ENCODE measurements at regions of chr15 and their contacts with region 1.

Region 1: GRCh38 chr15:78308422-78309032 is 9.1 kb upstream of the SKIC8 start:
- DNase-seq: peak; percentile 47
- H3K4me3 Mint-ChIP-seq: no peak overlapping the region
- H3K27ac Mint-ChIP-seq: no peak overlapping the region
- H3K4me1 Mint-ChIP-seq: no peaks in the 10 kb centered on the region
- H3K27me3 Mint-ChIP-seq: no peaks in the 10 kb centered on the region

Region 2: DNA sequence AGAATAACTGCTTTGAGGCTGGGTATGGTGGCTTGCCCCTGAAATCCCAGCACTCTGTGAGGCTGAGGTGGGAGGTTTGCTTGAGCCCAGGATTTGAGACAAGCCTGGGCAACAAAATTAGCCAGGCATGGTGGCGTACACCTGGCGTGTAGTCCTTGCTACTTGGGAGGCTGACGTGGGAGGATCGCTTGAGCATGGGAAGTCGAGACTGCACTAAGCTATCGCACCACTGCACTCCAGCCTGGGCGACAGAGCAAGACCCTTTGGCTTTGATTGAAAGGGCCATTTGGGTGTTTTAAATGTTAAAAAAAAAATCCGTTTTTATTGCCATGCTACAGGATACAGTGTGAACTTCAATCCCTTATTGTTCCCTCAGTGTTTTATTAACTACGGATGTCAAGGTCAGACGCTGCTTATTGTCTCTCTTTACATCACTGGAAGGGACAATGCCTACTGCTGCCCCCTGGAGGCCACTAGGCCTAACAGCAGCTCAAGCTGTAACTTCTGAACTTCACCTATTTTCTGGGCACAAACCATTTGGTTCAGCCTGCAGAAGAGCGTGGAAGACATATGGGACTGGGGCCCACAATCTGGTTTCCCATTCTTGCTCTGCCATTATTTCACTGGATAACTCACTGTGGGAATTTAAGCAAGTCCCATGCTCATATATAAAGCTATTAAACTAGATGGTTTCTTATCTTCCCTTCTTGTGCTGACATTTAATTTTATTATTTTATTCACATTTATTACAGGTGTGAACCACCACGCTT is 114.2 kb after region 1 on chr15:
- intact Hi-C with region 1: loop called (anchors 2 kb)
- DNase-seq: peak; percentile 46
- H3K4me3 Mint-ChIP-seq: no peak overlapping the region
- H3K27ac Mint-ChIP-seq: no peak overlapping the region
- H3K4me1 Mint-ChIP-seq: peaks cover 34% of the 10 kb centered on the region
- H3K27me3 Mint-ChIP-seq: peaks cover 12% of the 10 kb centered on the region

Region 3: DNA sequence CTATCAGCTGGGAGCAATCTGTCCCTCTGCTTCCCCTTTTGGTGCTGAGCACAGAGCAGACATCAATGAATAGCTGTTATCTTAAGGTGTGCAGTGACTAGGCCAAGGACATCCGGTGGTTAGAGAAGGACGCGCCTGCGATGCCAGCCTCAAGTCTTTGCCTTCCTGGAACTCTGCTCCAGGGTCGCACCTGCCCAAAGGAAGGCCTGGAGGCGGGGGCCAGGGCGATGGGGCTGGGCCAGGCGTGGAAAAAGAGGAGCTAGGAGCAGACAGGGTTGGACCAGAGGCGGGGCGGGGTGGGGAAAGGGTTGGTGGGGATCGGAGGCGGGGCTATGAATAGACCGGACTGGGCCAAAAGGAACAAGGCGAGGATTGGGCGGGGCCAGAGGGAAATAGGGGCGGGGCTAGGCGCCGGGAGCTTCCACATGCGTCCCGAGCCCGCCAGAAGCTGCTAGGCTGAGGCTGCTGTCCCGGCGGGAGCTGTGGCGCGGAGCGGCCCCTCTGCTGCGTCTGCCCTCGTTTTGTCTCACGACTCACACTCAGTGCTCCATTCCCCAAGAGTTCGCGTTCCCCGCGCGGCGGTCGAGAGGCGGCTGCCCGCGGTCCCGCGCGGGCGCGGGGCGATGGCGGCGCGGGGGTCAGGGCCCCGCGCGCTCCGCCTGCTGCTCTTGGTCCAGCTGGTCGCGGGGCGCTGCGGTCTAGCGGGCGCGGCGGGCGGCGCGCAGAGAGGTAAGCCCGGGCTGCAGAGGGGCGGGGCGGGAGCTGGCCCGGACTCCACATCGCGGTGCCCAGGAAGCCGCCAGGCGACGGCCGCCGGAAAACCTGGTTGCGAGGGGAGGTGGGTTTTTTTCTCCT is 256.8 kb after region 1 on chr15 and contains the start of gene CHRNA5:
- intact Hi-C with region 1: no loop called
- DNase-seq: peak; percentile 48
- H3K4me3 Mint-ChIP-seq: peak within 1 kb of the TSS; percentile 83
- H3K27ac Mint-ChIP-seq: peak within 1 kb of the TSS; percentile 66
- H3K4me1 Mint-ChIP-seq: peaks cover 25% of the 10 kb centered on the region
- H3K27me3 Mint-ChIP-seq: peaks cover 28% of the 10 kb centered on the region
- total RNA-seq, gene CHRNA5: 6.5 and 7.7 TPM in 2 replicates

Measured in activated T-helper 2 cell treated with anti-CD3 and anti-CD28 coated beads, Interferon-gamma antibody, Interleukin-2, Interleukin-4, amounts not matched to agents 10 μg/mL and 5 μg/mL and 100 μg/mL, durations not matched to agents 14 hours and 24 hours and 36 hours (primary cell).